ENCODE measurements at regions of chr1 and their contacts with region 1.

Region 1: DNA sequence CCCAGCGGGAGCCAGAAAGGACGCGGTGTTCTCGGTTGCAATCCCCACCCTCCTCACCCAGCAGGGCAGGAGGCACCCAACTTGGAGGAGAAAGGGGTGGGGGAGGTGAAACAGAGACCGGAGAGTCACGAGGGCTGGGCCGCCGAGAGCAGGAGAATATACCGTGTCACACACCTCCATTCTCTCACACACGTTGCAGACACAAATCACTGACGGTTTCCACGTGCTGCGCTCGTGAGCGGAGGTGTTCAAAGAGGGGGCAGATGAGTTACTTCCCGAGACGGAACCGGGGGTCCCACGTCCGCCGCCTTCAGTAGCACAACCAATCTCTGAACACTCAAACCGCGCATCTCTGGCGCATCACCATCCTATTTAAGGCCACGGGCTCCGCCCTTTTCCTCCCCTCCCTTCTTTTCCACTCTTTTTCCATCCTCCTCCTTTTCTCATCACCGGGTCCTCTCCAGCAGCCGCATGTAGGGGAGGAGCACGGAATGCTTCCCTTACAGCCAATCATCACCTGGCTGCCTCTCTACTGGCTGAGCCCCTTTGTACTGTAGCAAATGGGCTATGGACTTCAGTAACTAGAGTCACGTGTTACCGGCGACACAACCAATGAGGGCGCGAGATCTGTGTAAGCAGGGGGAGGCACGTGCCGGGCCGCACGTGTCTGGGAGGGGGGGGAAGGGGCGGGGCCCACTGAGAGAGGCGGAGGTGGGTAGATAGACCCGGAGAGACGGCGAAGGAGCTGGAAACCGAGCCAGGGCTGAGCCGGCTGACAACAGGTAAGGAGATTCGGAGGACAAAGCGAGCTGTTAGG is at the start of gene CIART:
- DNase-seq: peak; percentile 94 to 96
- ATAC-seq: peak; percentile 97
- H3K4me3 ChIP-seq: peak within 1 kb of the TSS; percentile 31 to 71
- H3K27ac ChIP-seq: peak within 1 kb of the TSS; percentile 78 to 92
- H3K4me1 ChIP-seq: no peaks in the 10 kb centered on the region
- H3K27me3 ChIP-seq: no peaks in the 10 kb centered on the region
- total RNA-seq, gene CIART: 3.0 to 6.6 TPM

Region 2: GRCh38 chr1:150235852-150236613 is 46.0 kb before region 1 on chr1 and contains the start of gene ANP32E:
- intact Hi-C with region 1: no loop called
- DNase-seq: peak; percentile 96 to 97
- ATAC-seq: peak; percentile 95
- H3K4me3 ChIP-seq: peak within 1 kb of the TSS; percentile 90 to 94
- H3K27ac ChIP-seq: peak within 1 kb of the TSS; percentile 77 to 93
- H3K4me1 ChIP-seq: no peaks in the 10 kb centered on the region
- H3K27me3 ChIP-seq: no peaks in the 10 kb centered on the region
- total RNA-seq, gene ANP32E: 32.9 to 37.1 TPM

Region 3: DNA sequence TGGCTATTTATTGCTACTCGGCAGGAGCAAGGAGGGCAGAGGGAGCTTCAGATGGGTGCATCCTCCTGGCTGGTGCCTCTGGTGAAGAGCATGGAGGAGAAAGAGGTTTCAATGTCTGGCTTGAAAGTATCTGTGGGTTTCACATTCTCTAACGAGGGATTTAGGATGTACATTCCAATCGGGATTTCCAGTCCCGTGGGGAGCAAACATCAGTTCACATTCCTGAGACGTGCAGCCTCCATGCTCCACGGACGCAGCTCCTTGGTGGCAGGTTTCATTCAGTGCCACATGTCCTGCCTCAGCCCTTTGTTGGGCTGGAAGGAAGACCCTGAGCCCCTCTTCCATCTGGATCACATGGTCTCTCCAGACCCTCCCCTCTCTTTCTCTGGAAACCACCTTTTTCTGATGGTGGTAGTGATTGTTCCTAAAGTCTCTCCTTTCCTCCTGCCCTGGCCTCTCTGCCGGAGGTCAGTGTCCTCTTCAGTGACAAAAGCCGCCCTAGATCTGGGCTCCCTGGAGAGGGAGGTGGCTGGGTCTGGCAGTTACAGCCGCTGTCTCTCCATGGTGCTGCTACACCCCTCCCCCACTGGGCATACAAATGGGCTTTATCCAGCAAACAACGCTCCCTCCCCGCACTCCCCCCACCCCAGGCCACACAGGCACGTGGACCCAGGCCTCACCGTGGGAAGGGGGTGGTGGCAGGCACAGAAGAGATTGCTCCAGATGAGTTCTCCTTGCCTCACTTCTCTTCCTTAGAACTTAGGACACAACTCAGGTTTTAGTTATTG is 25.3 kb before region 1 on chr1:
- intact Hi-C with region 1: loop called (anchors 2 kb)
- DNase-seq: no peak
- ATAC-seq: no peak
- H3K4me3 ChIP-seq: no peak overlapping the region
- H3K27ac ChIP-seq: no peak overlapping the region
- H3K4me1 ChIP-seq: peaks cover 0 to 3% of the 10 kb centered on the region in 2 donors
- H3K27me3 ChIP-seq: no peaks in the 10 kb centered on the region

Region 4: DNA sequence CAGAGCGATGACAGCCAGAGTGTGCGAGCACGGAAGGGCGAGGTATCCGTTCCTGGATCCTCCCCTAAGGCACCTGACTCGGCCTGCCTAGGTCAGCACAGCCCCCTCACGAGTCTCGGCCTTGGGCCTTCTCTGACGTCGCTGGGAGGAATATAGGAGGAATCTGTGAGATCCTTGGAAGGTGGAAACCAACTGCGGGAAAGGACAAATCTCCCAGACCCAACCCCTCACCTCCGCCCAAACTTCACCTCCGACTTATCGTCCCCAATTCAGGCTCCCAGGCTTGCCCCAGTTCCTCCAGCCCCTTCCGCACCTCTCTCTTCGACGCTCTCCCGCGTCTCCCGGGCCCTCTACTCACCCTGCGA is 13.7 kb before region 1 on chr1:
- intact Hi-C with region 1: no loop called
- DNase-seq: no peak
- ATAC-seq: peak; percentile 58
- H3K4me3 ChIP-seq: peak overlapping the region; percentile 73 to 94
- H3K27ac ChIP-seq: peak overlapping the region in 1 of 2 donors; percentile 54
- H3K4me1 ChIP-seq: peaks cover 0 to 3% of the 10 kb centered on the region in 2 donors
- H3K27me3 ChIP-seq: no peaks in the 10 kb centered on the region

Region 5: DNA sequence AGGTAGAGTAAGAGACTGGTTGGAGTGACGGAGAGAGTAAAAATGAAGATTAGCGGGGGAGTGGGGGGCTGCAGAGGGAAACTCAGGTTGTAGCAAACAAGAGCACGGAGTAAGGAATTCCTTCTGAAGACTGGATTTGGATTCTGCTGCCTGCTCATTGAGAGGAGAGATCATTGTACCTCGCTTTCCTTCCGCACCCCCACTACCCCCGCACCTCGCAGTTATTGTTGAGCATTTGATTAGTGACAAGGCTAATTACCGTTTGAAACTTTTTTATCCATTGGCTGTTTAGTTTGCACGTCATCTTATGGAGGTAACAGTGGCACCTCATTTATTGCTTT is 39.8 kb after region 1 on chr1:
- intact Hi-C with region 1: loop called in 1 of 2 experiments (anchors 5 kb)
- DNase-seq: no peak
- ATAC-seq: no peak
- H3K4me3 ChIP-seq: peak overlapping the region; percentile 50 to 97
- H3K27ac ChIP-seq: peak overlapping the region; percentile 18 to 19
- H3K4me1 ChIP-seq: peaks cover 0 to 3% of the 10 kb centered on the region in 2 donors
- H3K27me3 ChIP-seq: no peaks in the 10 kb centered on the region

Measured in aorta (tissue), 5 donors.